ENCODE measurements at regions of chr6 and their contacts with region 1.

Region 1: DNA sequence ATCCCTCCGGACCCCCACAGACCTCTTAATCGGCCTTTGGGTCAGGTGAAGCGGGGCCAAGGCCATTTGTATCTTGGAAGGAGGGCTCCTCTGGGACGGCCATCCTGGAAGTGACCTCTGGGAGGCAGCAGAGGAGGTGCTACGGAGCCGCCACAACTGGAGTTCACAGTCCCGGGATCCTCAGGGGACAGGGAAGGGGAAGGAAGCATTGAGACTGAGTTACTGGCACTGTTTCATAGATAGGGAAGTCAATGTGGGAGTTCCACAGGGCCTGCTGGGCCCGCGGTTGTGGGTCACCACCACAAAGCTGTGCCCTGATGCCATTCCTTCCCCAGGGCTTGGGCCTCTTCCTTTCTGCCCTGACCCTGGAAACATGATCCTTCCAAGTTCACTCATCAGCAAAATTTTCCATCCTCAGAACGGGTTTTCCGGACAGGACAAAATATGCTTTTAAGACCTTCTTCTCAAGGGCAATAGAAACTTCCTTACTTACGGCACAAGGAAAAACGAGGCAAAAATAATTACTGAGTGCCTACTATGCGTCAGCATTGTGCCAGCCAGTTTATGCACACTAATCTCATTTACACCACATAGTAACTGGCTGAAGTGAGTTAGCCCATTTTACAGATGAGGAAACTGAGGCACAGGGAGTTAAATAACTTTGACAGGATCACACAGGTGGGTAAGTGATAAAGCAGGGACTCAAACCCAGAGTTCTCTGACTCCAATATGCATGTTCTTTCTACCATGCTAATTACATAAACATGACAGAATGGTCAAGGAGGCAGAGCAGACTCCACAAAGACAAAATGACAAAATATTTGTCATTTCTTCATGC is 143.8 kb downstream of the UNC5CL start:
- H3K4me3 ChIP-seq: no peak overlapping the region
- H3K27ac ChIP-seq: no peak overlapping the region
- H3K4me1 ChIP-seq: no peaks in the 10 kb centered on the region
- CTCF ChIP-seq: peak; percentile 68

Region 2: GRCh38 chr6:40774932-40775331 is 120.2 kb before region 1 on chr6:
- CTCF ChIA-PET with region 1: no interaction called
- POLR2A ChIA-PET with region 1: no interaction called
- H3K4me3 ChIP-seq: no peak overlapping the region
- H3K27ac ChIP-seq: no peak overlapping the region
- H3K4me1 ChIP-seq: no peaks in the 10 kb centered on the region
- CTCF ChIP-seq: no peak

Region 3: GRCh38 chr6:40882323-40882997 is 12.7 kb before region 1 on chr6:
- CTCF ChIA-PET with region 1: interaction called, 23 read pairs
- POLR2A ChIA-PET with region 1: no interaction called
- H3K4me3 ChIP-seq: no peak overlapping the region
- H3K27ac ChIP-seq: no peak overlapping the region
- H3K4me1 ChIP-seq: peaks cover 4% of the 10 kb centered on the region; the same call in 1 of the 2 replicates
- CTCF ChIP-seq: no peak

Region 4: GRCh38 chr6:40912158-40912946 is 17.2 kb after region 1 on chr6:
- CTCF ChIA-PET with region 1: interaction called, 37 read pairs
- POLR2A ChIA-PET with region 1: no interaction called
- H3K4me3 ChIP-seq: no peak overlapping the region
- H3K27ac ChIP-seq: no peak overlapping the region
- H3K4me1 ChIP-seq: peaks cover 4% of the 10 kb centered on the region; the same call in 1 of the 2 replicates
- CTCF ChIP-seq: peak; percentile 38; the same call in 1 of the 2 replicates

Region 5: DNA sequence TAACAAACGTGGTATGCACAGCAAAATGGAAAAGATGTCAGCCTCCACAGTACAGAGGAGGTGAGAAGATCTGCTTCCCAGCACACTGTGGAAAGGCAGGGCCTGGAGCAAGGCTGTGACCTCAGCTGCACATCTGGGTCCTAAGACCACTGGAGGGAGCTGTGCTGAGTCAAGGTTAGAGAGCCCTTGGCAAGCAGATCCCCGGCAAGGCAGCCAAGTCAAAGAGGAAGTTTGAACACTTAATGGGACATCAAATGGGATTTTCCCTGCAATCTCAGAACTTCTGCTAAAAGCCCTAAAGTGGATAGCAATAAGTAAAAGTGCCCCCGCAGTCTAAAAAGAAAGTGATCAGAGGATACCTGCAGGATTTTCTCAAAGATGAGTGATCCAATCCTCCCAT is 104.4 kb after region 1 on chr6:
- CTCF ChIA-PET with region 1: interaction called, 24 read pairs
- POLR2A ChIA-PET with region 1: no interaction called
- H3K4me3 ChIP-seq: no peak overlapping the region
- H3K27ac ChIP-seq: no peak overlapping the region
- H3K4me1 ChIP-seq: peaks cover 20% of the 10 kb centered on the region
- CTCF ChIP-seq: peak; percentile 63; the same call in 1 of the 2 replicates

Region 6: DNA sequence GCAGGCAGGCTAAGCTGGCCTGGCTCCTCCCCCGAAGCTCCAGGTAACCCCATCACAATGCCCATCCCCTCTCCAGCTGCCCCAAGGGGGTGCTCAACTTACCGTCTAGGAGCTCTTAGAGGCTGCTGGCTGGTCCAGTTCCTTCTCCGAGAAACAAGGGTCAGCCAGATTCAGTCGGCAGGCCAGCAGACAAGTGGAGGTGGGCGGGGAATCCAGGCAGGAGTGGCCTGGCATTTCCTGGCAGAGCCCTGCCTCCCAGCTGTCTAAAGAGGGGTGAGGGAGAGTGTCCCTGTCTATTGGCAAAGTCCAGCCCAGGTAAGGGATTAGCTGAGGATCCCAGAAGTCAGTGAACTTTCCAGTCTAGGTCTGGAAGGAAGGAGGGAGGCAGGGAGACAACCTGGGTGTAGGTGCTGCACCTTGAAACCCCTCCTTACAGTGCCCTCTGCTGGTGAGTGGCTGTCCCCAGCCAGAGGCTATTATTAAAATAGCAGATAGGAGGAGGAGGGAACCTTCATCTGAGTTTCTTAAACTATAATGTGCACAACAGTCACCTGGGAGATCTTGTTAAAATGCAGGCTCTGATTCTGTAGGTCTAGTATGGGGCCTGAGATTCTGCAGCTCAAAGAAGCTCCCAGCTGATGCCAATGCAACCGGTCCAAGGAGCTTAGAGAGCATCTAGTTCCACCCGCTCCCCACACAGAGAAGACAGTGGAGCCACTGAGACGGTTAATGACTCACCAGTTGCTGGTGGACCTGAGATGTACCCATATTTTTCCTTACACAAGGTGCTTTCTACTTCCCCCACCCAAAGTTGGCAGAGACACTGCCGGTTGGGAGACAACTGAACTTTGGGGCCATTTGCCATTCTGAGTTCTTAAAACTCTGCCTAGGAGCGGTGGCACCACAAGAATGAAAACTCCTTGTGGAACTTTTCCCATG is 144.1 kb after region 1 on chr6 and contains the start of gene UNC5CL:
- CTCF ChIA-PET with region 1: interaction called, 21 read pairs
- POLR2A ChIA-PET with region 1: no interaction called
- H3K4me3 ChIP-seq: no peak within 1 kb of the TSS
- H3K27ac ChIP-seq: no peak within 1 kb of the TSS
- H3K4me1 ChIP-seq: no peaks in the 10 kb centered on the region
- CTCF ChIP-seq: no peak